Tibial artery (tissue), 4 donors: ENCODE measurements at regions of chr6 and their contacts with region 1.

Region 1: GRCh38 chr6:166313255-166314070 is 5.3 kb upstream of the PRR18 start:
- DNase-seq: peak in 1 of 2 donors; percentile 37
- H3K4me3 ChIP-seq: no peak overlapping the region
- H3K27ac ChIP-seq: no peak overlapping the region
- H3K4me1 ChIP-seq: peaks cover 0 to 2% (median 2%) of the 10 kb centered on the region in 4 donors
- H3K27me3 ChIP-seq: peaks cover 0 to 10% of the 10 kb centered on the region in 2 donors
- CTCF ChIP-seq: peak; percentile 56 to 67

Region 2: GRCh38 chr6:166275714-166276166 is 37.7 kb before region 1 on chr6:
- intact Hi-C with region 1: no loop called
- DNase-seq: peak; percentile 51 to 76
- H3K4me3 ChIP-seq: no peak overlapping the region
- H3K27ac ChIP-seq: no peak overlapping the region
- H3K4me1 ChIP-seq: peaks cover 0 to 10% (median 1%) of the 10 kb centered on the region in 4 donors
- H3K27me3 ChIP-seq: peaks cover 0 to 25% of the 10 kb centered on the region in 2 donors
- CTCF ChIP-seq: peak; percentile 91 to 98

Region 3: GRCh38 chr6:166400181-166400580 is 86.7 kb after region 1 on chr6:
- intact Hi-C with region 1: loop called (anchors 5 kb)
- DNase-seq: no peak
- H3K4me3 ChIP-seq: no peak overlapping the region
- H3K27ac ChIP-seq: no peak overlapping the region
- H3K4me1 ChIP-seq: peaks cover 0 to 5% (median 0%) of the 10 kb centered on the region in 4 donors
- H3K27me3 ChIP-seq: peaks cover 0 to 26% of the 10 kb centered on the region in 2 donors
- CTCF ChIP-seq: no peak

Region 4: GRCh38 chr6:167119670-167120381 is 806.4 kb after region 1 on chr6:
- intact Hi-C with region 1: no loop called
- DNase-seq: no peak
- H3K4me3 ChIP-seq: no peak overlapping the region
- H3K27ac ChIP-seq: no peak overlapping the region
- H3K4me1 ChIP-seq: peaks cover 0 to 9% (median 3%) of the 10 kb centered on the region in 4 donors
- H3K27me3 ChIP-seq: peaks cover 0 to 31% of the 10 kb centered on the region in 2 donors
- CTCF ChIP-seq: no peak